ENCODE measurements at regions of chr4 and their contacts with region 1.

Region 1: DNA sequence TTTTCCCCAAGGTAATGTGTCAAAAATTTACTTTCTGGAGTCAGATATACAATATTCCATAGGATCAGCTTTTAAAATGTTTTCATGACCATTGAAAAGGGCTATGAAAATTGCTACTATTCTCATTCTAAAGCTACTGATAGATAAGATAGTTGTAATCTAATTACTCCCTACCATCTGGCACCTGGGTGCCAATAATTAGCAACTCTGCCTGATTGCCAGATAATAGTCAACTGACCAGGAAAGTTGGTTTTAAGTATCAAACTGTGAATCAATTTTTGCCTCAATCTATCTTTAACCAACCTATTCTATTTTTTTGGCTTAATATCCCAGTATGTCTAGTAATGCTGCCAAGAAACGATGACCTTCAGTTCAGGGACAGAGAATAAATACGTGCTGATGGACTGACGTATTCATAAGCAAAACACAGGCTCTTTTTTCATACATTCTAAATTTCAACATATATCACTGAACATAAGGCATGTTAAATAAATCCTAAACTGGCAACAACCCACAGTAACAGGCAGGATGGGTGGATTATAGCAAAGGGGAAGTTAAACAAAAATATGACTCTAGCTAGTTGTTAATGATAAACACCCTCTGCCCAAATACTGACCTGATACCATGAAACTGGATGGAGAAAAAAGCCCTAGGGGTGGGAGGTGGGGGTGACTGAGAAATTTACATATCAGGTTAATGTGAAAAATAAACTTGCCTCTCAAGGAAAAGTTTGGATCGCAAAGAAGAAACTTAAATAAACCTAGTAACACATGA is 18.2 kb downstream of the SH3RF1 start:
- DNase-seq: no peak
- H3K4me3 ChIP-seq: no peak overlapping the region
- H3K27ac ChIP-seq: peak overlapping the region; percentile 81
- H3K4me1 ChIP-seq: peaks cover 54% of the 10 kb centered on the region
- H3K27me3 ChIP-seq: no peaks in the 10 kb centered on the region
- CTCF ChIP-seq: no peak

Region 2: GRCh38 chr4:169215656-169216055 is 36.9 kb before region 1 on chr4:
- CTCF ChIA-PET with region 1: no interaction called
- POLR2A ChIA-PET with region 1: interaction called, 11 read pairs
- intact Hi-C with region 1: no loop called
- DNase-seq: no peak
- H3K4me3 ChIP-seq: no peak overlapping the region
- H3K27ac ChIP-seq: no peak overlapping the region
- H3K4me1 ChIP-seq: no peaks in the 10 kb centered on the region
- H3K27me3 ChIP-seq: no peaks in the 10 kb centered on the region
- CTCF ChIP-seq: no peak

Region 3: GRCh38 chr4:169236873-169237626 is 15.5 kb before region 1 on chr4:
- CTCF ChIA-PET with region 1: no interaction called
- POLR2A ChIA-PET with region 1: no interaction called
- intact Hi-C with region 1: loop called (anchors 2 kb)
- DNase-seq: no peak
- H3K4me3 ChIP-seq: no peak overlapping the region
- H3K27ac ChIP-seq: no peak overlapping the region
- H3K4me1 ChIP-seq: no peaks in the 10 kb centered on the region; the same call in 1 of the 2 replicates
- H3K27me3 ChIP-seq: no peaks in the 10 kb centered on the region
- CTCF ChIP-seq: no peak

Region 4: DNA sequence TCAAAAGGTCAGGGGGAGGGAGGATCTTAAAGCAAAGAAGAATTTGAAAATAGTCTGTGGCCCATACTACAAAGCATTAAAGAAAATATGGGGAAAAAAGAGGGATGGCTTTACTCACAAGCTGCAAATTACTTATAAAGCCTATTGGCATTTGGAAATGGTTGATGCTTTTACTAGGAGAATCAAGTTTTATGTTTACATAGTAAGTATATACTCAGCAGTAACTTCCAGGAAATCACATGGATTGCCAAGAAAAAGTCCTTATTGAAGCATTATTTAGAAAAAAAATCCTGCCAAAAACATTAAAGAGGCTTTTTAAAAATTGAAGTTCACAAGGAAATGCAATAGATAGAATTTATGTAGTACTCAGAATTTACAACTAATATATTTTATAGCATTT is 26.6 kb after region 1 on chr4:
- CTCF ChIA-PET with region 1: no interaction called
- POLR2A ChIA-PET with region 1: no interaction called
- intact Hi-C with region 1: no loop called
- DNase-seq: no peak
- H3K4me3 ChIP-seq: no peak overlapping the region
- H3K27ac ChIP-seq: no peak overlapping the region
- H3K4me1 ChIP-seq: peaks cover 24% of the 10 kb centered on the region
- H3K27me3 ChIP-seq: no peaks in the 10 kb centered on the region
- CTCF ChIP-seq: no peak

Region 5: DNA sequence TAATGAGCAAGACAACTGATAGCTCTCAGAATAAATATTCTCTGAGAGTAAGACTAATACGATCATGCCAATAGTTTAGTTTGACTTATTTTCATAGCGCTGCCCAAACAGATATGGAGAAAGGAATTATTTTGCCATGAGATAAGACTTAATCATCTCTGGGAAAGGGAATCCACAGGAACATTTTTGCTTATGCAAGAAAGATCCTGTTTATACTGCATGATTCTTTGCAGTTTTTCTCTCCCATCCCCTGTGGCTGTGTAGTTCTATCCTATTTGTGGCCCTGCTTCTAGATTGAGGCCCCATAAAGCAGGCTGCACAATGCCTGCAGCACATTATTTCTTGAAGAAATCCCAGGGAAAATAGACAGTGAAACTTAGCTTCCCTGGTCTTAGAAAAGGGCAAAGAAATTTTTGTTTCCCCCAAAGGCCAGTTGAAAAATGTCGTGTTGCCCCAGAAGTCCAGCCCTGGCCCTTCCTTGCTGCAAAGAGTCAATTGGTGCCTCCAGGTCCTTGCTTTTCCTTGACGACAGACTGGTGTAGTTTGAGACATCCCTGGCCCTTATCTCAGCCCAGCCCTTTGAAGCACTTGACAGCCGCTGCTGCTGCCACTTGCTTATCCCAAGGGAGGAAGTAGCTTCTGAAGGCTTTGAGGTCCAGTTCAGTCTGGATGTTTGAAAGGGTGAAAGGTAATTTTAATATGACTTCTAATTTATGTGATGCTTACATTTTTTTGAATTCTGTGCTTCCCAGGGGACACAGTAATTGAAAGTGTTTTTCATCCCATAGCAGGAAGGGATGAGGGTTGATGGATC is 63.2 kb after region 1 on chr4:
- CTCF ChIA-PET with region 1: no interaction called
- POLR2A ChIA-PET with region 1: no interaction called
- intact Hi-C with region 1: no loop called
- DNase-seq: no peak
- H3K4me3 ChIP-seq: no peak overlapping the region
- H3K27ac ChIP-seq: no peak overlapping the region
- H3K4me1 ChIP-seq: no peaks in the 10 kb centered on the region
- H3K27me3 ChIP-seq: no peaks in the 10 kb centered on the region
- CTCF ChIP-seq: no peak

Region 6: DNA sequence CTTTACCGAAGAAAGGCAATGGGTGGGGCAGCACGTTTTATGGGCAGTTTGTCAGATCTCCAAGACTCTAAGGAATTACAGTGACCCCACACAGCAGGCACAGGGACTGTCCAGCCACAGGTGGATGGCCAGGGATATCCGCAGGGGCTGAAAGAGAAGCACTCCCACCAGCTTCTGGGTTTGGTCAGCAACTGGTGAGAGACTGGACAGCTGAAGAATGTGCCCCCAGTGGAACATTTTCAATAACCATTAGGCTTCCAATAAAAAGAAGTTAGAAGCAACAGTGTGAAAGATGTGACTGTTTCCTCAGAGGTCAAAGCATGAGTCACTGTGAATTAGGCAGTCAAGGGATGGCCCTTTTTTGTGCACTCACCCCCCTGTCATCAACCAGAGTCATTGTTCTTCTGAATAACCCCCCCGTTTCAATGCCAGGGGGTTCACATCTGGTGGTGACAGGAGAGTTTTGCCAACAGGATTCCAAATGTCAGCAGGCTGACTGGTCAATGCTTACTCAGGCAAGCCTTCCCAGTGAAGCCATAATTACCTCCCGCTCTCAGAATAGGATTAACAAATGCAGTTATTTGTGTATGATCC is 92.8 kb after region 1 on chr4:
- CTCF ChIA-PET with region 1: no interaction called
- POLR2A ChIA-PET with region 1: no interaction called
- intact Hi-C with region 1: no loop called
- DNase-seq: peak; percentile 26 to 70
- H3K4me3 ChIP-seq: no peak overlapping the region
- H3K27ac ChIP-seq: peak overlapping the region; percentile 72
- H3K4me1 ChIP-seq: peaks cover 26% of the 10 kb centered on the region
- H3K27me3 ChIP-seq: no peaks in the 10 kb centered on the region
- CTCF ChIP-seq: no peak

Region 7: GRCh38 chr4:169530048-169530447 is 277.5 kb after region 1 on chr4:
- CTCF ChIA-PET with region 1: no interaction called
- POLR2A ChIA-PET with region 1: no interaction called
- intact Hi-C with region 1: no loop called
- DNase-seq: no peak
- H3K4me3 ChIP-seq: no peak overlapping the region
- H3K27ac ChIP-seq: no peak overlapping the region
- H3K4me1 ChIP-seq: no peaks in the 10 kb centered on the region
- H3K27me3 ChIP-seq: no peaks in the 10 kb centered on the region
- CTCF ChIP-seq: no peak